Heart right ventricle (tissue), 16 donors: ENCODE measurements at regions of chr12 and their contacts with region 1.

Region 1: GRCh38 chr12:81450920-81451739 is 308.0 kb downstream of the PPFIA2 start:
- DNase-seq: peak in 1 of 2 donors; percentile 35
- ATAC-seq: peak in 6 of 8 donors; percentile 49 to 85 (median 68)
- H3K4me3 ChIP-seq: no peak overlapping the region
- H3K27ac ChIP-seq: no peak overlapping the region
- H3K4me1 ChIP-seq: no peaks in the 10 kb centered on the region
- H3K27me3 ChIP-seq: no peaks in the 10 kb centered on the region
- CTCF ChIP-seq: peak in 7 of 9 donors; percentile 50 to 64 (median 57)

Region 2: GRCh38 chr12:81378565-81379285 is 72.4 kb before region 1 on chr12:
- intact Hi-C with region 1: no loop called
- DNase-seq: no peak
- ATAC-seq: no peak
- H3K4me3 ChIP-seq: no peak overlapping the region
- H3K27ac ChIP-seq: no peak overlapping the region
- H3K4me1 ChIP-seq: no peaks in the 10 kb centered on the region
- H3K27me3 ChIP-seq: no peaks in the 10 kb centered on the region
- CTCF ChIP-seq: no peak

Region 3: GRCh38 chr12:81627336-81628189 is 176.4 kb after region 1 on chr12:
- intact Hi-C with region 1: loop called (anchors 1 to 5 kb)
- DNase-seq: no peak
- ATAC-seq: no peak
- H3K4me3 ChIP-seq: peak overlapping the region in 1 of 10 donors; percentile 9
- H3K27ac ChIP-seq: no peak overlapping the region
- H3K4me1 ChIP-seq: no peaks in the 10 kb centered on the region
- H3K27me3 ChIP-seq: no peaks in the 10 kb centered on the region
- CTCF ChIP-seq: peak in 8 of 9 donors; percentile 28 to 73 (median 62)

Region 4: GRCh38 chr12:81633127-81633526 is 182.0 kb after region 1 on chr12:
- intact Hi-C with region 1: loop called in 4 of 10 experiments (anchors 5 kb)
- DNase-seq: no peak
- ATAC-seq: no peak
- H3K4me3 ChIP-seq: no peak overlapping the region
- H3K27ac ChIP-seq: no peak overlapping the region
- H3K4me1 ChIP-seq: no peaks in the 10 kb centered on the region
- H3K27me3 ChIP-seq: no peaks in the 10 kb centered on the region
- CTCF ChIP-seq: no peak